GM12878 (cell line): ENCODE measurements at regions of chr1 and their contacts with region 1.

Region 1: DNA sequence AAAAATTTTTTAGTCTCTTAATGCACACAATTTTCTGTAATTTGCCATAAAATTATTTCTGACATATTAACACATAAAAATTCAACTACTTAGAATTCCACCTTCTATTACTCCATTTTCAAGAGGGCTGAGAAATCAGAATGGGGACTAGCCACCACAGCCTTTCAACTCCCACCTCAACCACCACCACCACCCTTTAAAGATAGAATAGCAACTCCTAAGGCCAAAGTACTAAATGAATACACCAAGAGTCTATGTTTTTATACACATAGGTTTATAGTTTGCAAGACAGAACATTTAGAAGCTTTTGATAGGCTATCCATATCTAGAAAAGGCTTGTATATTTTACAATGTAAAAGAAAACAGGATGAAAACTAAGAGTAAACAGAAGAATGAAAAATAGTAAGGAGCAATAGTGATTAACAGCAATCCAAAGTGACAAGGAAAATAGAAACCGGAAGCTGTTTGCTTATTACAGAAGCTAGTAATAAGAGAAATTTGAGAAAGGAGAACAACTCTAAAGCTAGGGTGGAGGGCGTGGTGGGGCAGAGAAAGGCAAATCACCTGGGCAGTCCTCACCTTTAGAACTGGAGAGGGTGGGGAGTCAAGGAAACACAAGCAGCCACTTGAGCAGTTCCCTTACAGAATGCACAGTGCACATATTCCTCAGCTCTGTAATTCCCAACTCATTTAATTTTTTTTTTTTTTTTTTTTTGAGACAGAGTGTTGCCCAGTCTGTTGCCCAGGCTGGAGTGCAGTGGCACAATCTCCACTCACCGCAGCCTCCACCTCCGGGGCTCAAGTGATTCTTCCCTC is 27.7 kb downstream of the EPS15 start:
- DNase-seq: no peak
- ATAC-seq: peak; percentile 75
- H3K4me3 ChIP-seq: peak overlapping the region; percentile 69; the same call in 1 of the 2 replicates
- H3K27ac ChIP-seq: peak overlapping the region; percentile 72
- H3K4me1 ChIP-seq: peaks cover 45% of the 10 kb centered on the region
- H3K27me3 ChIP-seq: no peaks in the 10 kb centered on the region
- CTCF ChIP-seq: no peak
- EP300 ChIP-seq: 0 out of 4 replicates have a peak, but pooled peaks of 1 of the 2 experiments have one; percentile 3
- POLR2A ChIP-seq: no peak
- RAD21 ChIP-seq: no peak

Region 2: DNA sequence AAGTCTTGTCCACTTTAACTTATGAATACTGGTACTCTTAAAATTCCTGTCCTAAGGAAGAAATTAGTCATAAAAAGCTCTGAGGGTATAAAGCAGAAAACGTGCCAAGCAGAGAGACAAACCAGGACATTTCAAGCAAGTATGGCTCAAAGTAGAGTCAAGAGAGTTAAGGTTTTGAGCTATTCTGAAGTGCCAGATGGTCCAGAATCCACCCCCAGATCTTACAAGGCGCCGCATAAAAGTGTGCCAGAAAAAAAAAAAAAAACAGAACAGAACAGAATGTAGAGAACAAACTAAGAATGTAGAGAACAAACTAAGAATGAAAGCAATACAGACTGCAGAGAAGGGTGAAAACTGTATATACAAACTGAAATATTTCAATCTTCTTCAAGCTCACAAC is 15.2 kb after region 1 on chr1:
- CTCF ChIA-PET with region 1: interaction called, 5 read pairs
- POLR2A ChIA-PET with region 1: interaction called, 10 read pairs
- RAD21 ChIA-PET with region 1: interaction called, 20 read pairs
- SMC1A ChIA-PET with region 1: interaction called, 53 read pairs
- in situ Hi-C with region 1: no loop called
- intact Hi-C with region 1: loop called (anchors 2 kb)
- DNase-seq: no peak
- ATAC-seq: peak; percentile 40
- H3K4me3 ChIP-seq: peak overlapping the region; percentile 25; the same call in 1 of the 2 replicates
- H3K27ac ChIP-seq: peak overlapping the region; percentile 74
- H3K4me1 ChIP-seq: peaks cover 37% of the 10 kb centered on the region
- H3K27me3 ChIP-seq: no peaks in the 10 kb centered on the region
- CTCF ChIP-seq: no peak
- EP300 ChIP-seq: peak in 1 of 2 experiments; percentile 73; a peak in 1 of 4 replicates
- POLR2A ChIP-seq: no peak
- RAD21 ChIP-seq: no peak

Region 3: DNA sequence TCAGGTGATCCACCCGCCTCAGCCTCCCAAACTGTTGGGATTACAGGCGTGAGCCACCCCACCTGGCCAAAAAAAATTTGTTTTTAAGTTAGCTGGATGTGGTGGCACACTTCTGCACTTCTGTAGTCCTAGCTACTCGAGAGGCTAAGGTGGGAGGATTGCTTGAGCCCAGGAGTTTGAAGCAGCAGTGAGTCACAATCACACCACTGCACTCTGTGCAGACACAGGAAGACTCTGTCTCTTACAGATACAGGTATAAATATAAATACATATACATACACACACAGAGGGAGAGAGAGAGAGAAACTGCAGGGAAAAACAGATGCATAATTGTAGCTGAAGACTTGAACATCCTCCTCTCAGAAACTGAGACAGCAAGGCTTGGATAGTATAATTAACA is 62.5 kb after region 1 on chr1:
- CTCF ChIA-PET with region 1: no interaction called
- POLR2A ChIA-PET with region 1: no interaction called
- RAD21 ChIA-PET with region 1: no interaction called
- SMC1A ChIA-PET with region 1: no interaction called
- in situ Hi-C with region 1: no loop called
- intact Hi-C with region 1: no loop called
- DNase-seq: no peak
- ATAC-seq: no peak
- H3K4me3 ChIP-seq: no peak overlapping the region
- H3K27ac ChIP-seq: no peak overlapping the region
- H3K4me1 ChIP-seq: peaks cover 12% of the 10 kb centered on the region; the same call in 1 of the 2 replicates
- H3K27me3 ChIP-seq: no peaks in the 10 kb centered on the region
- CTCF ChIP-seq: no peak
- EP300 ChIP-seq: no peak
- POLR2A ChIP-seq: no peak
- RAD21 ChIP-seq: no peak